ENCODE measurements at regions of chr2 and their contacts with region 1.

Region 1: GRCh38 chr2:45699032-45699658 is 47.7 kb downstream of the PRKCE start:
- DNase-seq: no peak

Region 2: DNA sequence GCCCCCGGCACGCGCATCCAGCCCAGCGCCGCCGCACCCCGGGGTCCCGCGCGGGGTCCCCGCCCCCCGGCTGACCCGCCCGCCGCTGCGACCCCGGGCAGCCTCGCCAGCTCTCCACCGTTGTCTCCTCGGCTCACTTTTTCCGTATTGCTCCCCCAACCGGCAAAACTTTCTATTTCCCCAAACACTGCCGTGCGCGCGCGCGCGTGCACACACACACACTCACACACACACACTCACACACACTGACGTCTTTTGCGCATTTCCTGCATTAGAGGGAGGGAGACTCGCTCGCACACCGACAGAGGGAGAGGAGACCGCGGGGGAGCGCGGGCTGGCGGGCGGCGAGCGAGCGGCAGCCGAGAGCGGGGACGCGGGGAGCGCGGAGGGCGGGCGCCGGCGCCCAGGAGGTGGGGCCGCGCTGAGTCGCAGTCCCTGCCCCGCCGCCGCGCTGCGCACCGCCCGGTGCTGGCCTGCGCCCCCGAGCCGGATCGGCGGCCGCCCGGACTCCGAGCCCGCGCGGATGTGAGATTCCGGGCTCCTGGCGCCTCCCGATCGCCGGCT is 48.2 kb before region 1 on chr2:
- intact Hi-C with region 1: loop called (anchors 10 kb)
- DNase-seq: peak; percentile 85 to 98 (median 91)

Region 3: GRCh38 chr2:45765728-45766254 is 66.6 kb after region 1 on chr2:
- intact Hi-C with region 1: loop called (anchors 10 kb)
- DNase-seq: no peak